Activated CD8-positive, alpha-beta memory T cell treated with anti-CD3 and anti-CD28 coated beads, Interleukin-2, amount 10 ng/mL, durations not matched to agents 7 days and 5 days (primary cell): ENCODE measurements at regions of chr6 and their contacts with region 1.

Region 1: DNA sequence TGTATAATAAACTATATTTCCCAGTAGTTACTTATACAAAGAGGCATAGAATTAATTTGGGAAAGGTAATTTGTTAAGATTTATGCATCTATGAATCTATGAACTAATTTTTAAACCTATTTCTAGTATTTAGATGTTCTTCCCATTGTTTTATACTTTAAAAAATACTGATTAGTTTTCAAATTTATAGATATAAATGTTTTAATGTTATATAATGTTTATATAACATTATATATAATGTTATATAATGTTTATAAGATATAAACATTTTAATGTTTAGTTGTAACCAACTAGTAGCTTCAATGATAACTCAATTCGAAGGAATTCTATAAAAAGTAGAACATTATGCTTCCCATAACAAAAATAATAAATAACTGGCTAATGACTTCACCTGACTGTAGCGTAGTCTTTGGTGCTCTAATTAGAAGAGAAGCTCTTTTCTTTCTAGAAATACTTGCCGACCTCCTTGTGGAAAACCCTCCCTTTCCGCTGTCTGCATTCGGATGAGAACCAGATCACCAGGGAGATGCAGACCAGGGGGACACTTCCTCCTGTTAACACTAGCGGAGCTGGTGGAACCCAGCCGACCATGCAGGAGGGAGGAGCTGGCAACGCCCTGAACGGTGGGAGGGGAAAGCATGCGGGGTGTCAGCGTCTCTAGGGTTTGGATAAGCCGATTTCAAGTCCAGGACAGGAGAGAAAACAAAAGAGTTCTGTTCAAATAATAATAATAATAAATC is 158.4 kb downstream of the OR2B2 start:
- DNase-seq: peak; percentile 90
- ATAC-seq: peak; percentile 70
- H3K4me3 Mint-ChIP-seq: peak overlapping the region; percentile 97
- H3K27ac Mint-ChIP-seq: peak overlapping the region; percentile 71
- H3K4me1 Mint-ChIP-seq: peaks cover 38% of the 10 kb centered on the region
- H3K27me3 Mint-ChIP-seq: peaks cover 10% of the 10 kb centered on the region

Region 2: DNA sequence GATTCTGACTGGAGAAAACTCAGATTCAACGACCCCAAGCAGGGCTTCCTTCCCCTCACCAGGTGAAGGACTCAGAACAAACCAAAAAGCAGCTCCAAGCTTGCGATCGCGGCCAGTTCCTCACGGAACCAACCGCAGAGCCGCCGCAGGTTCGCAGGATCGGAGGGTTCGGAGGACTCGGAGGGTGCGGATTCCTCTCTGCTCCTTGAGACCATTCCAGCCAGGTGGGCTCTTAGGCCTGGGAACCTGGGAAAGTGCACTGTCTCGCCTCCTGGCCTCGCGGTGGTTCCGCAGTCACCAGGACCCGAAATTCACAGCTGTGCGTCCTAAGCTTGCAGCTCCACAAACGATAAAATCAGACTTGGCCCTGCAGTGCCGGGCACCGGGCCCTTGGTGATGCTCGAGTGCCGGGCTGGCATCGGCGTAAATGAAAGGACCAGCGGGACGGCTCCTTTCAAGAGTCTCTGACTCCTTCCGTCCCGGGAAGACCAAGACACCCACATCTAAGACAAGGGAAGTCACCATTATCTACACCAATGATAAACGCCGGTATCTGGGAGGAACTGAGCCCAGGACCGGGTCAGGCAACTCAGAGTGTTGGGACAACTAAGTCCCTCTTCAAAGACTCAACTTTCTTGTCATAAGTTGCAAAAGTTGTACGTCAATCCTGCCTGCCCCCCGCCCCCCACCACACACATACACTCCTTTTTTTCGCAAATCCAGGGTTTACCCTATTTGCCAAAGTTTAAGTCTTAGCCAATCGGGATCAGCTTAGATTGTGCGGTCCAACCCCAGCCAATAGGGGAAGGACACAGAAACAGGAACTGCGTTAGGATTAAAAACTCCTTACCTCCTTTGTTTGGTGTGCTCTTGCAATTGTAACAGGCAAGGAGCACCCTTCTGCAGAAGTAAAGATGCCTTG is 576.1 kb before region 1 on chr6:
- CTCF ChIA-PET with region 1: interaction called, 10 read pairs
- DNase-seq: peak; percentile 87
- ATAC-seq: peak; percentile 86
- H3K4me3 Mint-ChIP-seq: peak overlapping the region; percentile 91
- H3K27ac Mint-ChIP-seq: peak overlapping the region; percentile 88
- H3K4me1 Mint-ChIP-seq: peaks cover 11% of the 10 kb centered on the region
- H3K27me3 Mint-ChIP-seq: peaks cover 34% of the 10 kb centered on the region

Region 3: DNA sequence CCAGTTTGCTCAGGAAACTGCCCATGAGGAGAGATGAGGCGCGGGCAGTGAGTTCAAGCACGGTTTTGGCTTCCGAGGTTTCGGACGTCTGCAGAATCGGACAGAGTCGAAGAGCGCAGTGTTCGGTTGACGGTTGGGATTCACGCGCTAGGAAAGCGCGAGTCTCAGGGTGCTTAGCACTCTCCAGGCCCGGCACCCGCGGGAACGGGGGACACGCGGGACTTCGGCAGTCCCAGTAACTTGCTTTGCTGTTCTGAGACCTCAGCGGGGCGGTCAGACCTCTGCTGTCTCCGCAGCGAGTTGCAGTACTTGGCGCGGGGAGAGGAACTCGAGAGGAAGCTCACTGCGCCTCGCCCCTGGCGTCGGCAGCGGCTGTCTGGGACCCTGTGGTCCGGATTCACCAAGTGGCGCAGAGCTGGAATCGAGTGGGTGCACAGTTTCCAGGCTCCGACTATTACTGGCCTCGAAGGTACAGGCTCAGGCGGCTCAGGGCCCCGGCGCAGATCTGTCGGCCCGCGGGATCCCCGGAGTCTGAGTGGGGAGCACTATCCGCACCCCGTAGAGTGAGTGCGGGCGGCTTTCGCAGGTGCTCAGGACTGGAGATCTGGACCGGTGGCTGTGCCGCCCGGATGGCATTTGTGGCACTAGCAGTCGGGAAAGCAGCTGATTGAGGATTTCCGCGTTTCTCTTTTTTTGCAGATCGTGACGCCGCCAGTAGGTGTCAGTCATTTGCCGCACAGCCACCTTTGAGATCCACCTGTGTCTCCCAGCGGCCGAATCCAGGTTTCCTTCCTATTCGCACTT is 441.5 kb before region 1 on chr6 and contains the start of gene POM121L2:
- CTCF ChIA-PET with region 1: interaction called, 11 read pairs
- DNase-seq: peak; percentile 73
- ATAC-seq: peak; percentile 76
- H3K4me3 Mint-ChIP-seq: peak within 1 kb of the TSS; percentile 70
- H3K27ac Mint-ChIP-seq: no peak within 1 kb of the TSS
- H3K4me1 Mint-ChIP-seq: peaks cover 10% of the 10 kb centered on the region
- H3K27me3 Mint-ChIP-seq: peaks cover 76% of the 10 kb centered on the region
- total RNA-seq, gene POM121L2: not detected

Region 4: DNA sequence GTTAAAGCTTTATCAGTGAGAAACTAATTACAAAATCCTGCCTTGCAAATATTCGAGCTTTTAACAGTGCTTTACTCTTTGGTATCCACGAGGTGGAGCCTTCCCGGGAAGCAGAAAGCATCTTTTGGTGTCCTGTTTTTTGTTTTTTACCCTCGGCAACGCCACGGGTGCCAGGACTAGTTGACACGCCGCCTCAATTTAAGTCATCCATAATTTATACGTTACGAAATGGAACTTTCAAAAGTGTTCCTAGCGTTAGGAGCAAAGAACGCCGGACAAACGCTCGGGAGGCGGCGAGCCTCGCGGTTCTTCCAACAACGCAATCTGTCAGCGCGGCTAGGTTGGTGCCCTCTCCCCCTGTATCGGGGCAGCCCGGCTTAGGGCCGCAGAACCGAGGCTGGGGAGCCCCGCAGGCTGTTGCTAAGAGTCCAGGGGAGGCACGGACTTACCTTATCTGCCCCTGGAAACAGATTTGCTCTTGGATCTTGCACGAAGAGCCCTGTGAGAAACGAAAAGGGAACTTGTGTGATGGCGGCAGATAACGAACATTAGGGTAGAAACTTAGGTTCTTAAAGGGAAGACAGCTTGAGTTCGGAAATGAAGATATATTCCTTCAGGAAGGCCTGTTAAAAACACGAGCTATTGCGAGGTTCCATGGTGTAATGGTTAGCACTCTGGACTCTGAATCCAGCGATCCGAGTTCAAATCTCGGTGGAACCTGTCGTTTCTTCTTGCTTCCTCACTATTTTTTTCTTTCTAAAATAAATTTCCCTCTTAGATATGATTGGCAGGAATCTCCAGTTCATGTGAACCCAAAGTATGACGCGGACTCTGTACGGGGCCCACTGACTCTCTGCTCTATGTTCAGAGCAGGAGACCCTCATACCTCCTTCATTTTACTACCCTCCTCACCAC is 234.7 kb before region 1 on chr6:
- CTCF ChIA-PET with region 1: interaction called, 30 read pairs
- DNase-seq: peak; percentile 63
- ATAC-seq: peak; percentile 73
- H3K4me3 Mint-ChIP-seq: peak overlapping the region; percentile 81
- H3K27ac Mint-ChIP-seq: peak overlapping the region; percentile 69
- H3K4me1 Mint-ChIP-seq: peaks cover 15% of the 10 kb centered on the region
- H3K27me3 Mint-ChIP-seq: peaks cover 26% of the 10 kb centered on the region

Region 5: GRCh38 chr6:27743818-27744217 is 10.0 kb before region 1 on chr6:
- CTCF ChIA-PET with region 1: interaction called, 13 read pairs
- DNase-seq: no peak
- ATAC-seq: no peak
- H3K4me3 Mint-ChIP-seq: no peak overlapping the region
- H3K27ac Mint-ChIP-seq: no peak overlapping the region
- H3K4me1 Mint-ChIP-seq: peaks cover 23% of the 10 kb centered on the region
- H3K27me3 Mint-ChIP-seq: peaks cover 38% of the 10 kb centered on the region

Region 6: DNA sequence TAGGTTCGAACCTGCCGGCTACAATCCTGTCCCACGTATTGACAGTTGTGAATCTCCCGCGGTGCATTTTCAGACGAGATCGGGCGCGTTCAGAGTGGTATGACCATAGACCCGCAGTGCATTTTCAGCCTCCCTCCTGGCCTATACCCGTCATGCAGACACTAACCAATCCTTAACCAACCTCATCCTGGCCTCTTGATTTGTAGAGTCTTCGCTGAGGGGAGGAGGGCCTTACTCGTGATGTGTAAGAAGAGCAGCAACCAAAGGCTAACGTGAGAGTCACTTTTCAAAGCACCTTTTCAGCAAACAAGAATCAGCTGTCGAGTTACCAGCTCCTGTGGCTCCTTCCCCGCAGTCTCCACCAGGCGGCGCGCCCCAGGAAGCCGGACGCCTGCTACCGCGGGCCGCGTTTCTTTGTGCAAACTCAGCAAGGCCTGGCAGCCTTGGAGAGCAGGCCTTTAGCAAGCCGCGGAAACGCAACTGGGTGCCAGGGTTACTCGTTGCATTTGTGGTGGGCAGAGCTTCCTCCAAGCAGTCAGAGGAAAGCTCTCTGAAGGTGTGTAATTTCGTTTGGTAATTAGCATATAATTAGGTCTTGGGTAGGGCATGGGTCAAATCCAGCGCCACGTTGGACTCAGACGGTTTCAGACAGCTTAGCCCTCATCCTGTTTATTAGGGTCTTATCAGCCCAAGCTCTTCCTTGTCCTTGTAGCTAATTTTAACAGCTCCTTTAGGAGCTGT is 18.6 kb after region 1 on chr6:
- CTCF ChIA-PET with region 1: interaction called, 42 read pairs
- DNase-seq: peak; percentile 92
- ATAC-seq: peak; percentile 99
- H3K4me3 Mint-ChIP-seq: peak overlapping the region; percentile 55
- H3K27ac Mint-ChIP-seq: peak overlapping the region; percentile 69
- H3K4me1 Mint-ChIP-seq: peaks cover 26% of the 10 kb centered on the region
- H3K27me3 Mint-ChIP-seq: peaks cover 34% of the 10 kb centered on the region

Region 7: GRCh38 chr6:27795697-27796494 is 42.1 kb after region 1 on chr6:
- CTCF ChIA-PET with region 1: interaction called, 28 read pairs
- DNase-seq: peak; percentile 54
- ATAC-seq: peak; percentile 62
- H3K4me3 Mint-ChIP-seq: no peak overlapping the region
- H3K27ac Mint-ChIP-seq: peak overlapping the region; percentile 60
- H3K4me1 Mint-ChIP-seq: peaks cover 43% of the 10 kb centered on the region
- H3K27me3 Mint-ChIP-seq: peaks cover 10% of the 10 kb centered on the region

Region 8: GRCh38 chr6:27873021-27873940 is 119.4 kb after region 1 on chr6:
- CTCF ChIA-PET with region 1: no interaction called
- DNase-seq: peak; percentile 92
- ATAC-seq: peak; percentile 56
- H3K4me3 Mint-ChIP-seq: peak overlapping the region; percentile 87
- H3K27ac Mint-ChIP-seq: peak overlapping the region; percentile 99
- H3K4me1 Mint-ChIP-seq: peaks cover 45% of the 10 kb centered on the region
- H3K27me3 Mint-ChIP-seq: peaks cover 4% of the 10 kb centered on the region